Gastrocnemius medialis (tissue), 4 donors: ENCODE measurements at regions of chr1 and their contacts with region 1.

Region 1: GRCh38 chr1:211247921-211248320 is 11.2 kb upstream of the RCOR3 start:
- DNase-seq: no peak
- ATAC-seq: no peak
- H3K4me3 ChIP-seq: no peak overlapping the region
- H3K27ac ChIP-seq: no peak overlapping the region
- H3K4me1 ChIP-seq: no peaks in the 10 kb centered on the region
- H3K27me3 ChIP-seq: no peaks in the 10 kb centered on the region
- CTCF ChIP-seq: no peak
- POLR2A ChIP-seq: no peak

Region 2: GRCh38 chr1:211145944-211146343 is 102.0 kb before region 1 on chr1:
- in situ Hi-C with region 1: no loop called
- intact Hi-C with region 1: no loop called
- DNase-seq: no peak
- ATAC-seq: no peak
- H3K4me3 ChIP-seq: no peak overlapping the region
- H3K27ac ChIP-seq: no peak overlapping the region
- H3K4me1 ChIP-seq: no peaks in the 10 kb centered on the region
- H3K27me3 ChIP-seq: peaks cover 0 to 9% (median 0%) of the 10 kb centered on the region in 3 donors
- CTCF ChIP-seq: no peak
- POLR2A ChIP-seq: no peak

Region 3: GRCh38 chr1:211174375-211174774 is 73.5 kb before region 1 on chr1:
- in situ Hi-C with region 1: no loop called
- intact Hi-C with region 1: no loop called
- DNase-seq: no peak
- ATAC-seq: no peak
- H3K4me3 ChIP-seq: no peak overlapping the region
- H3K27ac ChIP-seq: no peak overlapping the region
- H3K4me1 ChIP-seq: no peaks in the 10 kb centered on the region
- H3K27me3 ChIP-seq: no peaks in the 10 kb centered on the region
- CTCF ChIP-seq: no peak
- POLR2A ChIP-seq: no peak

Region 4: GRCh38 chr1:211296396-211296795 is 48.5 kb after region 1 on chr1:
- in situ Hi-C with region 1: loop called in 1 of 4 experiments (anchors 10 kb)
- intact Hi-C with region 1: no loop called
- DNase-seq: no peak
- ATAC-seq: no peak
- H3K4me3 ChIP-seq: no peak overlapping the region
- H3K27ac ChIP-seq: no peak overlapping the region
- H3K4me1 ChIP-seq: no peaks in the 10 kb centered on the region
- H3K27me3 ChIP-seq: no peaks in the 10 kb centered on the region
- CTCF ChIP-seq: no peak
- POLR2A ChIP-seq: no peak

Region 5: GRCh38 chr1:211587123-211587522 is 339.2 kb after region 1 on chr1:
- in situ Hi-C with region 1: no loop called
- intact Hi-C with region 1: no loop called
- DNase-seq: no peak
- ATAC-seq: no peak
- H3K4me3 ChIP-seq: no peak overlapping the region
- H3K27ac ChIP-seq: no peak overlapping the region
- H3K4me1 ChIP-seq: peaks cover 0 to 3% of the 10 kb centered on the region in 2 donors
- H3K27me3 ChIP-seq: no peaks in the 10 kb centered on the region
- CTCF ChIP-seq: no peak
- POLR2A ChIP-seq: no peak